CD4-positive, alpha-beta T cell (primary cell): ENCODE measurements at regions of chr15 and their contacts with region 1.

Region 1: DNA sequence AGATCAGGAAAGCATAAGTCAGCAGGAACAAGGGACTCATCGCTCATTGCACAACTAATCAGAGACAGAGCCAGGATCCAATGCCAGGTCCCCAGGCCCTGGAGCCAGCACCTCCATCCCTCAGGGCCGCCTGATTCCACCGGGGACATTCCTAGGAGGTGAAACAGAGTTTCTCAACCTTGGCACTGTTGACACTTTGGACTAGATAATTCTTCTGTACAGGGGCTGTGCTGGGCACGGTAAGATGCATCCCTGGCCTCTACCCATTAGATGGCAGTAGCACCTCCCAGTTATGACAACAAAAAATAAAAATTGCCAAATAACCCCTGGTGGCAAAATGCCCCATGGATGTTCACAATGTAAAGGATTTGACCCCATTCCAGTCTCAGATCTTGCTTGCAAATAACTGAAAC is 127.7 kb downstream of the MTHFS start:
- DNase-seq: peak in 3 of 14 experiments; percentile 4 to 15 (median 13)
- ATAC-seq: no peak
- H3K4me3 ChIP-seq: no peak overlapping the region
- H3K4me3 Mint-ChIP-seq: no peak overlapping the region
- H3K27ac ChIP-seq: no peak overlapping the region
- H3K27ac Mint-ChIP-seq: no peak overlapping the region
- H3K4me1 ChIP-seq: no peaks in the 10 kb centered on the region
- H3K4me1 Mint-ChIP-seq: no peaks in the 10 kb centered on the region
- H3K27me3 ChIP-seq: no peaks in the 10 kb centered on the region
- H3K27me3 Mint-ChIP-seq: peaks cover 18% of the 10 kb centered on the region
- CTCF ChIP-seq: no peak

Region 2: GRCh38 chr15:78960308-78960707 is 808.8 kb before region 1 on chr15:
- CTCF ChIA-PET with region 1: no interaction called
- POLR2A ChIA-PET with region 1: no interaction called
- intact Hi-C with region 1: loop called in 1 of 2 experiments (anchors 5 kb)
- DNase-seq: no peak
- ATAC-seq: no peak
- H3K4me3 ChIP-seq: no peak overlapping the region
- H3K4me3 Mint-ChIP-seq: no peak overlapping the region
- H3K27ac ChIP-seq: no peak overlapping the region
- H3K27ac Mint-ChIP-seq: no peak overlapping the region
- H3K4me1 ChIP-seq: no peaks in the 10 kb centered on the region
- H3K4me1 Mint-ChIP-seq: no peaks in the 10 kb centered on the region
- H3K27me3 ChIP-seq: no peaks in the 10 kb centered on the region
- H3K27me3 Mint-ChIP-seq: no peaks in the 10 kb centered on the region
- CTCF ChIP-seq: no peak

Region 3: GRCh38 chr15:79779746-79780145 is 10.7 kb after region 1 on chr15:
- CTCF ChIA-PET with region 1: no interaction called
- POLR2A ChIA-PET with region 1: no interaction called
- intact Hi-C with region 1: no loop called
- DNase-seq: peak in 3 of 14 experiments; percentile 13 to 37 (median 29)
- ATAC-seq: no peak
- H3K4me3 ChIP-seq: no peak overlapping the region
- H3K4me3 Mint-ChIP-seq: no peak overlapping the region
- H3K27ac ChIP-seq: no peak overlapping the region
- H3K27ac Mint-ChIP-seq: no peak overlapping the region
- H3K4me1 ChIP-seq: peaks cover 7% of the 10 kb centered on the region
- H3K4me1 Mint-ChIP-seq: no peaks in the 10 kb centered on the region
- H3K27me3 ChIP-seq: peaks cover 3 to 5% of the 10 kb centered on the region in 2 experiments
- H3K27me3 Mint-ChIP-seq: peaks cover 20% of the 10 kb centered on the region
- CTCF ChIP-seq: no peak

Region 4: GRCh38 chr15:79922512-79923075 is 153.5 kb after region 1 on chr15:
- CTCF ChIA-PET with region 1: no interaction called
- POLR2A ChIA-PET with region 1: no interaction called
- intact Hi-C with region 1: no loop called
- DNase-seq: no peak
- ATAC-seq: no peak
- H3K4me3 ChIP-seq: peak overlapping the region; percentile 80
- H3K4me3 Mint-ChIP-seq: peak overlapping the region; percentile 96
- H3K27ac ChIP-seq: peak overlapping the region; percentile 91 to 97
- H3K27ac Mint-ChIP-seq: peak overlapping the region; percentile 95
- H3K4me1 ChIP-seq: peaks cover 21% of the 10 kb centered on the region
- H3K4me1 Mint-ChIP-seq: peaks cover 27% of the 10 kb centered on the region
- H3K27me3 ChIP-seq: no peaks in the 10 kb centered on the region
- H3K27me3 Mint-ChIP-seq: no peaks in the 10 kb centered on the region
- CTCF ChIP-seq: no peak